ENCODE measurements at regions of chr20 and their contacts with region 1.

Region 1: DNA sequence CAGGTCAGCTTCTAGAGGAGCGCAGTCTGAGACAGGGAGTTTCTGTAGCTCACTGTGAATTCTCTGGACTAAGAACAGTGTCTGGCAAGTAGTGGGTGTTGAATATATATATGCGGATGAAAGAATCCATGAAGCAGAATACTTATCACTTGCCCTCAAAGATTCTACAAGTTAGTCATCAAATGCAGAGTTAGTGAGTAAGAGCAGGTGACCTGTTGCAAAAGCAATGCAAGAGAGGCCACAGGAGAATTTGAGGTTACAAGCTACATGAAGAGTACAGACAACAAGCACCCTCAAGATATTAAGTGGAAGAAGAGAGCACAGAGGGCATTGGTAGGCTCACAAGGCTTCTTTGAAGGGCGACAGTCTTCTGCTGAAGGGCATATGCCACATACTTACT is 103.4 kb upstream of the BTBD3 start:
- DNase-seq: no peak
- H3K4me3 ChIP-seq: no peak overlapping the region
- H3K27me3 ChIP-seq: no peaks in the 10 kb centered on the region
- CTCF ChIP-seq: no peak

Region 2: GRCh38 chr20:11553603-11554002 is 260.7 kb before region 1 on chr20:
- CTCF ChIA-PET with region 1: no interaction called
- POLR2A ChIA-PET with region 1: no interaction called
- DNase-seq: no peak
- H3K4me3 ChIP-seq: no peak overlapping the region
- H3K27me3 ChIP-seq: no peaks in the 10 kb centered on the region
- CTCF ChIP-seq: peak; percentile 29; the same call in 1 of the 2 replicates

Region 3: DNA sequence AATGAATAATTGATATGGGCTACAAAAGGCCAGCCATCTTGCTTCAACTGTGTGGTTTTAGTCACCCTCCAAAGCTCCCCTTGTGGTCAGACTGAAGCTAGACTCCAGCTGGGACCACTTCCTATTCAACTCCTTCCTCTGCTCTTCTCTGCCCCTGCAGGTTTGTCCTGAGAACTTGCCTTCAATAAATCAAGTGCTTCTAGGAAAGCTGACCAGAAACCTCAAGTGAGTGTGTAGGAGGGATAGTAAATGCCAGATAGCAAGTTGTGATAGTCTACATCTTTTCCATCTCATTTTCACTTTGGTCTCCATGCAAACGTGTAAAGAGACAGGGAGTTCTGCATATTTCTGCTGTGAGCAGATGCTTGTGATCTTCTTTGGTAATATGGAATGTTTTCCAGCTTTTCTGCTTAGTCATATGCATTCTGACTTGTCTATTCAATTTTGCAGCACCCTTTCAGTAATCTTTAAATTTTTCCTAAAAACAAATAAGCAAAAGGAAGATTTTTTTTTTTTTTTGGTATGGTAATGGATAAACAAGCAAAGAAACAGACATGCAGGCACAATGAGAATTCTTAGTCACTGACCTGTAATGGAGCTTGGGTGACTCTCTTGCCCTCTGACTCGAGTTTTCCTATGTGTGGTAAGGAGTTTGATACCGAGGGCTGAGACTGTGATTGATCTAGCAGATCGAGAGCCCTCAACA is 97.9 kb before region 1 on chr20:
- CTCF ChIA-PET with region 1: no interaction called
- POLR2A ChIA-PET with region 1: interaction called, 13 read pairs
- DNase-seq: peak; percentile 78
- H3K4me3 ChIP-seq: no peak overlapping the region
- H3K27me3 ChIP-seq: 0 out of 2 replicates have a peak, but pooled peaks cover 3% of the 10 kb centered on the region
- CTCF ChIP-seq: peak; percentile 65

Region 4: DNA sequence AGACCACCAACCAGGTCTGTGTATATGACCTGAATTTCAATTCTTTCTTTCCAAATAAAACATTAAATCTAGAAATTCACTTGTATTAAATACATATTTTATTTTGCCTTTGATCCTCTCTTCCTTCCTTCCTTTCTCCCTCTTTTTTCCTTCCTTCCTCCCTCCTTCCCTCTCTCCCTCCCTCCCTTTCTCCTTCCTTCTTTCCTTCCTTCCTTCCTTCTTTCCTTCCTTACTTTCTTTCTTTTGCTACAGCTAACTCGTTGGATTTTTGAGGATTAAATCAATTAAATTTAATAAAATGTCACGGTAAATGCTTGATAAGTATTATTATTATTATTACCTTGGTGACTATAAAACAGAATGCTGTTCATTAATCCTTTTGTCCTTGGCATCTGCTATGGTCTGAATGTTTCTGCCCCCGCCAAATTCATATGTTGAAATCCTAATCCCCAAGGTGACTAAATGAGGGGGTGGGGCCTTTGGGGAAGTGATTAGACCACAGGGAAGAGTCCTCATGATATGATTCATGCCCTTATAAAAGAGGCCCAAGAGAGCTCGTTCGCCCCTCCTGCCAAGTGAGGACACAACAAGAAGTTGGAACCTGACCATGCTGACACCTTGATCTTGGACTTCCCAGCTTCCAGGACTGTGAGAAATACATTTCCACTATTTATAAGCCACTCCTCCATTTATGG is 35.9 kb after region 1 on chr20:
- CTCF ChIA-PET with region 1: no interaction called
- POLR2A ChIA-PET with region 1: no interaction called
- DNase-seq: no peak
- H3K4me3 ChIP-seq: no peak overlapping the region
- H3K27me3 ChIP-seq: no peaks in the 10 kb centered on the region
- CTCF ChIP-seq: no peak